CD4-positive, alpha-beta T cell (primary cell): ENCODE measurements at regions of chr3 and their contacts with region 1.

Region 1: DNA sequence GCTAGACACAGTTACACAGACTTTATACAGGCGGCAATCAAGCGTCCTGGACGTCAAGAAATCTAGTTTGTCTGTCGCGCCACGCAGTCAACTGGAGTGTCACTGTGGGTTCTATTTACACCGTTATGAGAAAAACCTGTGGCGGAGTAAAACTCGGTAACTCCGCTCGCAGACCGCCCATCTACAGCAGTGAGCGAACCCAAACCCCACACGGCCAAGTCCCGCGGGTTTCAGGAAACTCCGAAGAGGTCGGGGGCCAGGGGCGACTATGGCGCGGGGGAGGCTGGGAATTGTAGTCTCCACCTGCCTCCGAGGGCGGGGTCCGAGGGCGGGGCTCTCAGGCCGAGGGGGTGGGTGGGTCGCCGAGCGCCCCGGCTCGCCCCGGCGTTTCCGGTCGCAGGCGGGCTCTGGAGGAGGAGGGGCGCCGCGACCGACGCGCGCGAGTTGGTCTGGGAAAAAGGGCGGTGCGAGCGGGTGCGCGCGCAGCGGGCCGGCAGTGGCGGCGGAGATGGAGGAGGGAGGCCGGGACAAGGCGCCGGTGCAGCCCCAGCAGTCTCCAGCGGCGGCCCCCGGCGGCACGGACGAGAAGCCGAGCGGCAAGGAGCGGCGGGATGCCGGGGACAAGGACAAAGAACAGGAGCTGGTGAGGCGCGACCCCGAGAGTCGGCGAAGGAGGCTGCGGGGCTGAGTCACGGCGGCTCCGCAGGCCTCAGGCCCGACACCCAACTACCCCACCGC is at the start of gene PSMD2:
- DNase-seq: peak; percentile 94 to 99 (median 98)
- ATAC-seq: peak; percentile 93
- H3K4me3 ChIP-seq: peak within 1 kb of the TSS; percentile 95
- H3K4me3 Mint-ChIP-seq: peak within 1 kb of the TSS; percentile 96
- H3K27ac ChIP-seq: peak within 1 kb of the TSS; percentile 60 to 86
- H3K27ac Mint-ChIP-seq: peak within 1 kb of the TSS; percentile 91
- H3K4me1 ChIP-seq: peaks cover 24% of the 10 kb centered on the region
- H3K4me1 Mint-ChIP-seq: peaks cover 26% of the 10 kb centered on the region
- H3K27me3 ChIP-seq: no peaks in the 10 kb centered on the region
- H3K27me3 Mint-ChIP-seq: no peaks in the 10 kb centered on the region
- CTCF ChIP-seq: no peak
- total RNA-seq, gene PSMD2: 159 TPM

Region 2: GRCh38 chr3:182792901-182793662 is 1505.8 kb before region 1 on chr3 and contains the start of gene ATP11B:
- CTCF ChIA-PET with region 1: no interaction called
- POLR2A ChIA-PET with region 1: no interaction called
- intact Hi-C with region 1: loop called in 1 of 2 experiments (anchors 5 kb)
- DNase-seq: peak; percentile 60 to 90 (median 75)
- ATAC-seq: peak; percentile 59
- H3K4me3 ChIP-seq: peak within 1 kb of the TSS; percentile 84
- H3K4me3 Mint-ChIP-seq: peak within 1 kb of the TSS; percentile 100
- H3K27ac ChIP-seq: peak within 1 kb of the TSS; percentile 95 to 98
- H3K27ac Mint-ChIP-seq: peak within 1 kb of the TSS; percentile 100
- H3K4me1 ChIP-seq: peaks cover 17% of the 10 kb centered on the region
- H3K4me1 Mint-ChIP-seq: peaks cover 43% of the 10 kb centered on the region
- H3K27me3 ChIP-seq: no peaks in the 10 kb centered on the region
- H3K27me3 Mint-ChIP-seq: no peaks in the 10 kb centered on the region
- CTCF ChIP-seq: no peak
- total RNA-seq, gene ATP11B: 139 to 143 TPM

Region 3: DNA sequence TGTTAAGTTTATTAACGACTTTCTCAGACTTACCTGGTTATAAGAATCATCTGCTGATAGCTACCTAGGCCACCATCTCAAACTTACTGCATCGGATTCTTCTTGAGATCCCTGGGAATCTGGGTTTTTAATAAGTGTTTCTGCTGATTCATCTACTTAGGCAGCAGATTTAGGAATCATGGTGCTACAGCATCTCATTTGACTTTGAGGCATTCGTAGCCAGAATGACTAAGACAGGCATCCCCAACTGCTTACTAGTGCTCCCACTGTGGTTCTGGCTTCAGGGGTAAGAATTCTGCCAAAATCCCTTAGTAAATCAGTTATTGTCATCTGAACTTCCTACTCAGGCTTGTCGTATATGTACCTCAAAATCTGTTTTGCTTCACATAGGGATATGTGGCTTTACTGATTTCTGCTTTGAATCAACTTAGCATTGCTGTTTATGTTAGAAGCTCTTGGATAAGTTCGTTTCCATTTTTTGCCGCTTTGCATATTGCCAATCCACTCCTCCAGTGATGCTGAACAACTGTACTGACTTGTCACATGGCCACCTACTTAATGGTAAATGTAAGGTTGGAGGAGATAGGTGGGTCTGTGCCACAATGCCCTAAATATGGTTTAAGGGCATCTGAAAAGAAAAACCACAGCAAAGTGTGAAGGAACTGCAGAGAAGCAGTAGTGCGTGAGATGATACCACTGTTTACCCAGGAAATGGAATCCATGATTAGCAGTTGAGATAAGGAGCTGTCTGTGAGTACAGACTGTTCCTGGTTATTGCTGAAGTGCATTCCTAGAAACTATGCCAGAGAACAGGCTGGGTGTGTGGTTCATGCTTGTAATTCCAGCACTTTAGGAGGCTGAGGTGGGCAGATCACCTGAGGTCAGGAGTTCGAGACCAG is 533.8 kb before region 1 on chr3:
- CTCF ChIA-PET with region 1: no interaction called
- POLR2A ChIA-PET with region 1: no interaction called
- intact Hi-C with region 1: no loop called
- DNase-seq: peak in 1 of 14 experiments; percentile 1
- ATAC-seq: no peak
- H3K4me3 ChIP-seq: no peak overlapping the region
- H3K4me3 Mint-ChIP-seq: no peak overlapping the region
- H3K27ac ChIP-seq: no peak overlapping the region
- H3K27ac Mint-ChIP-seq: peak overlapping the region; percentile 19
- H3K4me1 ChIP-seq: peaks cover 10% of the 10 kb centered on the region
- H3K4me1 Mint-ChIP-seq: peaks cover 15% of the 10 kb centered on the region
- H3K27me3 ChIP-seq: no peaks in the 10 kb centered on the region
- H3K27me3 Mint-ChIP-seq: no peaks in the 10 kb centered on the region
- CTCF ChIP-seq: no peak

Region 4: DNA sequence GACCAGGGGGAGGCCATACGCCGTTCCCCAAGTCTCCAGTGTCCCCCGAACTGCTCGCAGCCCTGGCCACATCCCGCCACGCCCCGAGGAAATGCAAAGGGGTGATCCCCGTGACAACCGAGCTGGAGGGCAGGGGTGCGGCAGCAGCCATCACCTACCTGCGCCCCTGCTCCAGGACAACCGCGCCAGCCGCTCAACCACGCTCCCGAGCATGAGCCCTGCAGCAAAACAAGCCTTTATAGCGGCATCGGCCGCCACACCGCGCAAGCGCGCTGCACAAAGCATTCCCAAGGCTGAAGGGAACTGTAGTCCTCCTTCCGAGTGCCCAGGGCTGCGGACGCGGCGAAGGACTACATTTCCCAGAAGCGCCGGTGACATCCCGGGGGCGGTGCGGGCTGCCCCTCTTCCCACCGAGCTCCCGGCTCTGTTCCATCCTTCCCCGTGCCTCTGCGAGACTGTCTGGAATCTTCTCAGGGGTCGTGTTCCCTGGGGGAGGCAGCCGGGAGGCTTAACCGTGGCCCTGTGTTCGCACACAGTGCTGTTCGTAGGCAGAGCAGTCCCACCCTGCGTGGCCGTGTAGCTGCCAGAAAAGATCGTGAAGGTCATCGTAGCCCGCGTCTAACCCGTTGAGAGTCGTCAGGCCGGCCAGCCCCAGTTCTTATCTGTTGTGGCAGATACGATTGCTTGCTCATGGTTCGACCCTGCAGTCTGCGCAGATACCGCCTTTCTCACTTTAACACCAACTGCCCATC is 281.1 kb before region 1 on chr3 and contains the start of gene ABCC5:
- CTCF ChIA-PET with region 1: no interaction called
- POLR2A ChIA-PET with region 1: no interaction called
- intact Hi-C with region 1: loop called in 1 of 2 experiments (anchors 5 kb)
- DNase-seq: peak; percentile 65 to 92 (median 78)
- ATAC-seq: peak; percentile 94
- H3K4me3 ChIP-seq: peak within 1 kb of the TSS; percentile 96
- H3K4me3 Mint-ChIP-seq: peak within 1 kb of the TSS; percentile 100
- H3K27ac ChIP-seq: peak within 1 kb of the TSS; percentile 23 to 43
- H3K27ac Mint-ChIP-seq: peak within 1 kb of the TSS; percentile 66
- H3K4me1 ChIP-seq: peaks cover 16% of the 10 kb centered on the region
- H3K4me1 Mint-ChIP-seq: peaks cover 26% of the 10 kb centered on the region
- H3K27me3 ChIP-seq: peaks cover 0 to 3% of the 10 kb centered on the region in 2 experiments
- H3K27me3 Mint-ChIP-seq: peaks cover 5% of the 10 kb centered on the region
- CTCF ChIP-seq: peak; percentile 89
- total RNA-seq, gene ABCC5: 10.8 to 11.4 TPM

Region 5: DNA sequence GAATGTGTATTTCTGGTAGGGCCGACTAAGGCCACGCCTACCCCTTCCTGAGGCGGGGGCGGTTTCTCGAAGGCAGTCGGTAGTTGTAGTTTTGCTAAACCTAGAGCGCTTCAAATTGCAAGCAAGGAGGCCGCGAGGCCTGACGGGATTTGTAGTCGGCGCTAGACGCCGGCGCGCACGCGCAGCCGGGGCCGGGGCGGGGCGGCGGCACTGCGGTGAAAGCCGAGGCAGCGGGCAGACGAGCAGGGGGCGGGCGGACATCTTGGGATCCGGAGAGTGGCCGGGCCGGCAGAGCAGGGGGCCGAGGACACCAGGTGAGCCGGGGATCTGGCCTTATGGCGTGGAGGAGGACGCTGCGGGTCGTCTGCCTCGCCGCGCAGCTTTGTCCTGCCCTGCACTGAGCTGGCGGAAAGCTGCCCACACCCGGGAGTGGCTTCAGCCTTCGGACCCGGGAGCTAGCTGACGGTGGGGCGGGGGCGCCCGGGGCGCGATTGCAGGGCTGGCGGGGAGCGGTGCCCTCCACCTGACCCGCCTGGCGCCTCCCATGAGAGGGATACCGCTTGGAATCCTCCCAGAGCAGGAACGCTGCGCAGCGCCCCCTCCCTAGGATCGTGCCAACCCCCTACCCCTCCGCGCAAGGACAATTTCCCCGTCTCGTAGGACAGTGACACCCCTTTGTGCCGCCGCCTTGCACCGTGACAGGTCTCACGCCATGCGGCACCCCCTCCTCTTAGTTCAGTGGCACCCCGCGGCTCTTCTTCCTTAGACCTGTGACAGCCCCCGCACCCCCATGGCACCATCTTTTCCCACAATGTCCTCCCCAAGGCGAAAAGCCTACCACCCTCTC is 124.1 kb before region 1 on chr3 and contains the start of gene AP2M1:
- CTCF ChIA-PET with region 1: no interaction called
- POLR2A ChIA-PET with region 1: no interaction called
- intact Hi-C with region 1: loop called (anchors 1 kb)
- DNase-seq: peak; percentile 94 to 99 (median 97)
- ATAC-seq: peak; percentile 98
- H3K4me3 ChIP-seq: peak within 1 kb of the TSS; percentile 87
- H3K4me3 Mint-ChIP-seq: peak within 1 kb of the TSS; percentile 96
- H3K27ac ChIP-seq: peak within 1 kb of the TSS in 1 of 2 donors; percentile 79
- H3K27ac Mint-ChIP-seq: peak within 1 kb of the TSS; percentile 86
- H3K4me1 ChIP-seq: peaks cover 35% of the 10 kb centered on the region
- H3K4me1 Mint-ChIP-seq: peaks cover 42% of the 10 kb centered on the region
- H3K27me3 ChIP-seq: no peaks in the 10 kb centered on the region
- H3K27me3 Mint-ChIP-seq: no peaks in the 10 kb centered on the region
- CTCF ChIP-seq: no peak
- total RNA-seq, gene AP2M1: 123 to 136 TPM

Region 6: DNA sequence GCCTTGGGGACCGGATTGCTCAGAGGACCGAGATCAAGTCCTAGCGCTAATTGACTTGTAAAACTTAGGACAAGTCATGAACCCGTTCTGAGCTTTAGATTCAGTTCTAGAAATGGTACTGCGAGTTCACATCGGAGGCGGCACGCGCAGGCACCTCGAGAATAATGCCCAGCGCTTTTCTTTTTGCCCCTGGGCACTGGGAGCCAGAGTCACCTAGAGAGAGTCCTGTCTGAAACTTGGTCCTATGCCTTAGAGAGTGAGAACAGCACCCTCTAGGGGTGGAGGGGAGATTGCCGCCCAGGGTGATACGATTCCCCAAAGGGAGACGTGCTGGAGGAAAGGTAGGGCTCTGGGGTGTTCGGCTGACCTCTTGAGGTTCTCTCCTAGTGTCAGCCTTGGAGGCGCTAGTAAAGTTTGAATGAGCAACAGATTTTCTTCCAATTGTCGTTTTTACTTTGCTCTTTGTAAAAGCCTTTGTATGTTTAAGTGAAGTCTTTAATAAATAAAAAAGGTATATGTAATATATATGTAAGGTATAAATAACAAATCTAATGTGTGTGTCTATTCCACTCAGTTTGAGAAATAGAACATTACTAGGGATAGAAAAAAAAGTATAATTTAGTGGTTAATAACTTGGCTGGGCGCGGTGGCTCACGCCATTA is 48.6 kb before region 1 on chr3:
- CTCF ChIA-PET with region 1: interaction called, 4 read pairs
- POLR2A ChIA-PET with region 1: no interaction called
- intact Hi-C with region 1: loop called (anchors 1 to 5 kb)
- DNase-seq: peak; percentile 77 to 92 (median 86)
- ATAC-seq: peak; percentile 62
- H3K4me3 ChIP-seq: peak overlapping the region; percentile 86
- H3K4me3 Mint-ChIP-seq: peak overlapping the region; percentile 93
- H3K27ac ChIP-seq: peak overlapping the region; percentile 61 to 79
- H3K27ac Mint-ChIP-seq: peak overlapping the region; percentile 94
- H3K4me1 ChIP-seq: peaks cover 28% of the 10 kb centered on the region
- H3K4me1 Mint-ChIP-seq: peaks cover 21% of the 10 kb centered on the region
- H3K27me3 ChIP-seq: no peaks in the 10 kb centered on the region
- H3K27me3 Mint-ChIP-seq: no peaks in the 10 kb centered on the region
- CTCF ChIP-seq: peak; percentile 88

Region 7: DNA sequence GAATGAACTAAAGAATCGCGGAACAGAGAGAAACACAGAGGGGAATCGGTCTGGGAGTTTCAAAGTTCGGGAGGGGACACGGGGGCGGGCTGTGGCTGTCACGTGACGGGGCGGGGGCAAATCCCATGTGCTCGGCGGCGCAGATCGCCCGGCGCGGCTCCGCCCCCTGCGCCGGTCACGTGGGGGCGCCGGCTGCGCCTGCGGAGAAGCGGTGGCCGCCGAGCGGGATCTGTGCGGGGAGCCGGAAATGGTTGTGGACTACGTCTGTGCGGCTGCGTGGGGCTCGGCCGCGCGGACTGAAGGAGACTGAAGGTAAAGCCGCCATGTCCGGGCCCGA is 15.4 kb after region 1 on chr3 and contains the start of gene EIF4G1:
- CTCF ChIA-PET with region 1: no interaction called
- POLR2A ChIA-PET with region 1: interaction called, 3 read pairs
- intact Hi-C with region 1: loop called (anchors 1 kb)
- DNase-seq: peak; percentile 84 to 98 (median 90)
- ATAC-seq: peak; percentile 83
- H3K4me3 ChIP-seq: peak within 1 kb of the TSS; percentile 77
- H3K4me3 Mint-ChIP-seq: peak within 1 kb of the TSS; percentile 94
- H3K27ac ChIP-seq: peak within 1 kb of the TSS; percentile 84 to 95
- H3K27ac Mint-ChIP-seq: peak within 1 kb of the TSS; percentile 95
- H3K4me1 ChIP-seq: peaks cover 38% of the 10 kb centered on the region
- H3K4me1 Mint-ChIP-seq: peaks cover 27% of the 10 kb centered on the region
- H3K27me3 ChIP-seq: no peaks in the 10 kb centered on the region
- H3K27me3 Mint-ChIP-seq: no peaks in the 10 kb centered on the region
- CTCF ChIP-seq: no peak
- total RNA-seq, gene EIF4G1: 211 to 217 TPM

Region 8: GRCh38 chr3:184334470-184335158 is 35.7 kb after region 1 on chr3:
- CTCF ChIA-PET with region 1: no interaction called
- POLR2A ChIA-PET with region 1: no interaction called
- intact Hi-C with region 1: no loop called
- DNase-seq: peak in 8 of 14 experiments; percentile 24 to 71 (median 44)
- ATAC-seq: peak; percentile 43
- H3K4me3 ChIP-seq: no peak overlapping the region
- H3K4me3 Mint-ChIP-seq: peak overlapping the region; percentile 83
- H3K27ac ChIP-seq: peak overlapping the region; percentile 88 to 95
- H3K27ac Mint-ChIP-seq: peak overlapping the region; percentile 97
- H3K4me1 ChIP-seq: peaks cover 38% of the 10 kb centered on the region
- H3K4me1 Mint-ChIP-seq: peaks cover 34% of the 10 kb centered on the region
- H3K27me3 ChIP-seq: no peaks in the 10 kb centered on the region
- H3K27me3 Mint-ChIP-seq: no peaks in the 10 kb centered on the region
- CTCF ChIP-seq: no peak

Region 9: DNA sequence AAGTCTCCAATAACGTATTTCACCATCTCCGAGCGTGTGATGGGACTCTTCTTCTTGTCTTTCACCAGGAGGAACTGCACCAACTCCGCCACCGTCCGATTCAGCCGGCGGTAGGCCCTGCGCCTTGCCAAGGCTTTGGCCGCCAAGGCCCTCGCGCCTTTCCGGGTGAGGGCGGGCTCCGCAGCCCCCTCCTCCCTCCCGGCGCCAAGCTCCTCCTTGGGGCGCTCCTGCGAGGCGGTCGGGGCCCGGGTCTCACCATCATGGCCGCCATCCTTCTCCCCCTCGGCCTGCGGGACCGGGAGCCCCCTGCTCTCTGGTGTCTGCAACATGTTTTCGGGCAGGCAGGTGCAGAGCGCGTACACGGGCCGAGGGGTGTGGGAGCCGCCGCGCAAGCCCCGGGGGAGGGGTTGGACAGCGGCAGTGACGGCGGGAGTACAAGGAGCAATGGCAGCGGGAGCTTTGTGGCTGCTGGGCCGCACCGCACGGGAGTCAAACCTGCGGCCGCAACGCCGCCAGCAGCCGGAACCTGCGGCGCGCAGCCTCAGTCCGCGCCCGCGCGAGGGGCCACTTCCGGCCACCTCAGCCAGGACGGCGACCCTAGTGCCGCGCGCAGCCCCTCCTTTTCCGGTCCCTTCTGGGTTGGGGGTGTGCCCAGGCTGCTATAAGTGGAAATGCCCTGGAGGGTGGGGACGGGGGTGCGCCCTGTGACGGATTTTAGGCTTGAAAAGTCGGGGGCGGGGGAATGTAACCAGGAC is 412.7 kb after region 1 on chr3 and contains the start of gene MAGEF1:
- CTCF ChIA-PET with region 1: no interaction called
- POLR2A ChIA-PET with region 1: no interaction called
- intact Hi-C with region 1: loop called in 1 of 2 experiments (anchors 5 kb)
- DNase-seq: peak; percentile 37 to 86 (median 68)
- ATAC-seq: peak; percentile 78
- H3K4me3 ChIP-seq: peak within 1 kb of the TSS; percentile 87
- H3K4me3 Mint-ChIP-seq: peak within 1 kb of the TSS; percentile 93
- H3K27ac ChIP-seq: peak within 1 kb of the TSS; percentile 72 to 80
- H3K27ac Mint-ChIP-seq: peak within 1 kb of the TSS; percentile 77
- H3K4me1 ChIP-seq: peaks cover 25% of the 10 kb centered on the region
- H3K4me1 Mint-ChIP-seq: peaks cover 26% of the 10 kb centered on the region
- H3K27me3 ChIP-seq: no peaks in the 10 kb centered on the region
- H3K27me3 Mint-ChIP-seq: no peaks in the 10 kb centered on the region
- CTCF ChIP-seq: no peak
- total RNA-seq, gene MAGEF1: 5.8 to 6.1 TPM